Colonic mucosa (tissue), 4 donors: ENCODE measurements at regions of chr12 and their contacts with region 1.

Region 1: DNA sequence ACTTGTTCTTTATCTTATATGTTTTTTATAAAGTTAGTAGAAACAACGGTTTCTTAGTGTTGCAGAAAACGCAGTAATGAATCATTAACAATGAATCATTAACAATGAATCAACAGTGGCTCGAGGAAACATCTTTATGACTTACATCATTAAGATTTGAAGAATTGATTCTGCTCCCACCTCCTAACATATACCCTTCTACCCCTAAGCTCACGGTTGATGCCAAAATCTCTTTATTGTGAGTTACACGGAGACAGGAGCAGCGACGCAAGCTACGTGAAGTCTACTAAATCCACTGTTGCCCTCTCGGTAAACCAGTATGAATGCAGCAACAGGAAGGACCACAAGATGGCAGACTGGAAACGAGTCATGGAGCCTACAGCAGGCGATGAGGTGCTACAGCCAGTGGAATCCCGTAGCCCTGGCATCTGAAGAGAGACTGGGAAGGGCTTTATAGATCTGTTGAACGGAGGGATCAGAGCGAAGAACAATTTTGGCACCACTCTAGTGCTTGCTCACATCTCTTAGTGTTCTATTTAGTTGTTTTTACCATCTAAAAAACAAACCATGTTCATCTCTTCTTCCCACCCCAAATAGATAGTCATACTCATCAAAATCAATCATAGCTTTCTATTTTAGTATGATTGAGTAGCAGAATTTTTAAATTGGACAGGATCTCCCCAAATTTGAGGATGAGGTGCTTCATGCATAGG is 332.7 kb downstream of the DUSP6 start:
- DNase-seq: peak; percentile 92
- H3K4me3 ChIP-seq: no peak overlapping the region
- H3K27ac ChIP-seq: no peak overlapping the region
- H3K4me1 ChIP-seq: no peaks in the 10 kb centered on the region
- H3K27me3 ChIP-seq: no peaks in the 10 kb centered on the region
- CTCF ChIP-seq: peak; percentile 71

Region 2: DNA sequence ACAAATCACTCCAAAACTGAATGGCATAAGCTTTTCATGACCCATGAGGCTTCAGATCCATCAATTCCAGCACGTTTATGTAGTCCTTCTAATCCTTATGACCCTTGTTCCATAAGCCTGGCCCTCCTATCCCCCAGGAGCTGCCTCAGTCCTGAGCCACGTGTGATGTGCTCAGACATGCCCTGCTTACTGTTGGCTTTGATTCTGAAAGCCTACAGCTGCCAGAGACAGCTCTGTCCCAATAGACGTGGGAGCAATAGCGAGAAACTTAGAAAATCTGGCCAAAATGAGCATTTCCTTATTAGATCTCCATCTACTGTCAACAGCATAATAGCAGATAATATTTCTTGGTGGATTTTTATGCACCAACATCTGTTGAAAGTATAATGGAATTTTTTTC is 299.6 kb after region 1 on chr12:
- intact Hi-C with region 1: no loop called
- DNase-seq: no peak
- H3K4me3 ChIP-seq: no peak overlapping the region
- H3K27ac ChIP-seq: no peak overlapping the region
- H3K4me1 ChIP-seq: no peaks in the 10 kb centered on the region
- H3K27me3 ChIP-seq: no peaks in the 10 kb centered on the region
- CTCF ChIP-seq: no peak

Region 3: GRCh38 chr12:89529738-89530137 is 510.2 kb after region 1 on chr12:
- intact Hi-C with region 1: loop called (anchors 2 kb)
- DNase-seq: no peak
- H3K4me3 ChIP-seq: no peak overlapping the region
- H3K27ac ChIP-seq: no peak overlapping the region
- H3K4me1 ChIP-seq: no peaks in the 10 kb centered on the region
- H3K27me3 ChIP-seq: no peaks in the 10 kb centered on the region
- CTCF ChIP-seq: peak; percentile 44